Mammary epithelial cell (primary cell): ENCODE measurements at regions of chr1 and their contacts with region 1.

Region 1: DNA sequence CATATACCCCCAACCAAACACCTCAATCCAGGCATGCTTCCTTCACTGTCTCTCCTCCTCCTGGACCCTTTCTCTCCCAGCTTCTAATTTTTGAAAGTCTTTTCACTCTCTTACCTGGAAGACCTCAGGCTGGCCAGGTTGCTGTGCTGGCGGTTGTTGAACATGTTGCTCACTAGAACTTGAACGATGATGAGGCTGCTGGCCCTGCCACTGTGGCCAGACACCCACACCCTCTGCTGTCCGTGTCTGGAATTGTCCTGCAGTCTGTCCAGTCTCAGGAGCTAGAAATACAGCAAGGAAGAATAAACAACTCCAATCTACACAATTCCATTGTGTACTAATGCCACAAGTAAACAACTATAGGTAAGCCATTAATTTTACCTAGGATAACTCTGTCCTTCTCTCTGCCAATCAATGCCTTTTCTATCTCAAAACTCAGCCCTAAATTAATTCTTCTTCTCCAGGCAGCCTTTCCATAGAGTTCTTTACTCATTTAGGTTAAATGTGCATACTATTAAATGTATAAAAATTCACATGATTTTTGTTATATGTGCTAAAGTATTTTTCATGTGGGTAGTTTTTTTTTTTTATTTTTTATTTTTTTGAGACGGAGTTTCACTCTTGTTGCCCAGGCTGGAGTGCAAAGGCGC is 5.1 kb upstream of the CTSK start:
- DNase-seq: peak; percentile 61
- H3K4me3 ChIP-seq: no peak overlapping the region
- H3K27ac ChIP-seq: no peak overlapping the region
- H3K4me1 ChIP-seq: peaks cover 14% of the 10 kb centered on the region
- H3K27me3 ChIP-seq: no peaks in the 10 kb centered on the region
- CTCF ChIP-seq: peak; percentile 90 to 95

Region 2: GRCh38 chr1:150464422-150464826 is 348.8 kb before region 1 on chr1:
- CTCF ChIA-PET with region 1: no interaction called
- dilution Hi-C with region 1: no loop called
- in situ Hi-C with region 1: no loop called
- intact Hi-C with region 1: loop called (anchors 1 kb)
- DNase-seq: peak; percentile 42
- H3K4me3 ChIP-seq: no peak overlapping the region
- H3K27ac ChIP-seq: no peak overlapping the region
- H3K4me1 ChIP-seq: peaks cover 10% of the 10 kb centered on the region
- H3K27me3 ChIP-seq: no peaks in the 10 kb centered on the region
- CTCF ChIP-seq: peak; percentile 76 to 77

Region 3: DNA sequence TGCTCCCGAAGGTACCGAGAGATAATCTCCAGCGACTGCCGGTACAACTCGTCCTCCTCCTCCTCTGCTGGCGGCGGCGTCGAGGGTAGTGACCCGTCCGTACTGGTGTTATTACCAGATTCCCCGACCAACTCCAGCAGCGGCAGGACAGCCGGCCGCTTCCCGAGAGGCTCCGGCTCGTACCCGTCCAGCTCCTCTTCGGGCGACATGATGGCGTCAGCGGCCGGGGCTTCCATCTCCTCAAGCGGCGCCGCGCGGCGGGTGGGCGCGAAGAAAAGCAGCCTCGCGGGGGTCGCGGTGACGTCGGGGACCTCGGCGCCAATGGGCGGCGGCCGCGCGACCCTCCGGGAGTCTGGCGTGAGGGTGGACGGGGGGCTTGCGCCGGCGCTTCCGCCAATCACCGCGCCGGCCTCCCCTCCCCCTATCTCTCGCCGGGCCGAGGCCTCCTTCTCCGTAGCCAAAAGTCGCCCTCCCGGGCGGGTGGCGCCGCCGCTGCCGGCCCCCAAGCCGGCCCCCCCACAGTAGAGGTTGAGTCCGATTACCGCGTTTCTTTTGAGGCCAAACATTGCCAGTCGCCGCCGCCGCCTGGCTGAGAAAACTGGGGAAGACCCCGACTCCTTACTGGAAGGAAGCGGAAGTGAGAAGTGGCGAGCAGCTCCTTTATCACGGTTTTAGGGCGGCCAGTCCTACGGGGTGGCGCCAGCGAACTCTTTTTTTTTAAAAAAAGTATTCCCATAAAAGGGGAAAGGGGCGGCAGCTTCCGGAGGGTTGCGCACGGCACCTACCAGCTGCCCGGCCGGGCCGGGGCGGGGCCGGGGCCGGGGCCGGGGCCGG is 234.0 kb before region 1 on chr1 and contains the start of gene MCL1:
- CTCF ChIA-PET with region 1: no interaction called
- dilution Hi-C with region 1: no loop called
- in situ Hi-C with region 1: no loop called
- intact Hi-C with region 1: loop called (anchors 1 kb)
- DNase-seq: peak; percentile 96
- H3K4me3 ChIP-seq: peak within 1 kb of the TSS; percentile 77 to 97 (median 85)
- H3K27ac ChIP-seq: peak within 1 kb of the TSS; percentile 89
- H3K4me1 ChIP-seq: peaks cover 19% of the 10 kb centered on the region
- H3K27me3 ChIP-seq: no peaks in the 10 kb centered on the region
- CTCF ChIP-seq: peak in 1 of 2 donors; percentile 9
- total RNA-seq, gene MCL1: 289 to 455 TPM

Region 4: DNA sequence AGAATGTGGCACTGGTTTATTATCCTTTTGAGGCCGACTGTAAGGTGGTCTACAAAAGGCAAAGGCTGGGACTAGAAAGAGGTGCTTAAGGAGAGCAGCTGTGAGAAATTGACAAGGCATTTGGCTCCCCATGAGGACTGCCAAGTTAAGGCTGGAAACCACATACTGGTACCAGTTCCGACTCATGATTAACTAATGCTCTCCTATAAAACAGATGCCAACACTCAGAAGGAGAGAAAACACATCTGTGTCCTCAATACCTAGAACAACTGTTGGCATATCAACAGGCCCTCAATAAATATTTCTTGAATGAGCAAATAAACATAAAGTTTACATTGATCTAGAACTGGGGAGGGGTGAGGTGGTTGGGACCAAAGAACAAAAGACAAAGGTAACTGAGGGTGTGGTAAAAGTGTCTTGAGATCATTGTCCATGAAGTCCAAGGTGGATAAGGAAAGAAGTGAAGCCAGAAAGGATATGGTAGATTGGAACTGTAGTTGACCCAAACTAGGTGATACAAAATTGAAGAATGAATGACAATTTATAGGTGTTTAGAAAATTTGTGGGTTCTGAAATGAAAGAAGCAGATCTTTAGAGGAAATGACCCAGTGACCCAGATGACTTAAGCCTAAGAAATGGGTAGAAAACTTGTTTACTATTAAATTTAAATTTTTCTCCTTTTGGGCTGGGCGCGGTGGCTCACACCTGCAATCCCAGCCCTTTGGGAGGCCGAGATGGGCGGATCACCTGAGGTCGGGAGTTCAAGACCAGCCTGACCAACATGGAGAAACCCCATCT is 216.9 kb before region 1 on chr1:
- CTCF ChIA-PET with region 1: no interaction called
- dilution Hi-C with region 1: no loop called
- in situ Hi-C with region 1: no loop called
- intact Hi-C with region 1: no loop called
- DNase-seq: peak; percentile 75
- H3K4me3 ChIP-seq: no peak overlapping the region
- H3K27ac ChIP-seq: peak overlapping the region; percentile 78
- H3K4me1 ChIP-seq: peaks cover 10% of the 10 kb centered on the region
- H3K27me3 ChIP-seq: no peaks in the 10 kb centered on the region
- CTCF ChIP-seq: no peak

Region 5: GRCh38 chr1:150696590-150697524 is 116.3 kb before region 1 on chr1 and contains the start of gene GOLPH3L:
- CTCF ChIA-PET with region 1: no interaction called
- dilution Hi-C with region 1: no loop called
- in situ Hi-C with region 1: no loop called
- intact Hi-C with region 1: loop called (anchors 1 kb)
- DNase-seq: peak; percentile 100
- H3K4me3 ChIP-seq: peak within 1 kb of the TSS; percentile 59 to 90 (median 60)
- H3K27ac ChIP-seq: peak within 1 kb of the TSS; percentile 65
- H3K4me1 ChIP-seq: peaks cover 8% of the 10 kb centered on the region
- H3K27me3 ChIP-seq: no peaks in the 10 kb centered on the region
- CTCF ChIP-seq: peak in 1 of 2 donors; percentile 31
- total RNA-seq, gene GOLPH3L: 11.7 to 22.4 TPM

Region 6: GRCh38 chr1:150777544-150777943 is 35.6 kb before region 1 on chr1:
- CTCF ChIA-PET with region 1: no interaction called
- dilution Hi-C with region 1: no loop called
- in situ Hi-C with region 1: no loop called
- intact Hi-C with region 1: no loop called
- DNase-seq: no peak
- H3K4me3 ChIP-seq: no peak overlapping the region
- H3K27ac ChIP-seq: no peak overlapping the region
- H3K4me1 ChIP-seq: no peaks in the 10 kb centered on the region
- H3K27me3 ChIP-seq: no peaks in the 10 kb centered on the region
- CTCF ChIP-seq: no peak

Region 7: GRCh38 chr1:150979092-150980056 is 166.2 kb after region 1 on chr1:
- CTCF ChIA-PET with region 1: no interaction called
- dilution Hi-C with region 1: no loop called
- in situ Hi-C with region 1: no loop called
- intact Hi-C with region 1: no loop called
- DNase-seq: peak; percentile 73
- H3K4me3 ChIP-seq: no peak overlapping the region
- H3K27ac ChIP-seq: no peak overlapping the region
- H3K4me1 ChIP-seq: peaks cover 47% of the 10 kb centered on the region
- H3K27me3 ChIP-seq: no peaks in the 10 kb centered on the region
- CTCF ChIP-seq: peak; percentile 100